ENCODE measurements at regions of chr14 and their contacts with region 1.

Region 1: DNA sequence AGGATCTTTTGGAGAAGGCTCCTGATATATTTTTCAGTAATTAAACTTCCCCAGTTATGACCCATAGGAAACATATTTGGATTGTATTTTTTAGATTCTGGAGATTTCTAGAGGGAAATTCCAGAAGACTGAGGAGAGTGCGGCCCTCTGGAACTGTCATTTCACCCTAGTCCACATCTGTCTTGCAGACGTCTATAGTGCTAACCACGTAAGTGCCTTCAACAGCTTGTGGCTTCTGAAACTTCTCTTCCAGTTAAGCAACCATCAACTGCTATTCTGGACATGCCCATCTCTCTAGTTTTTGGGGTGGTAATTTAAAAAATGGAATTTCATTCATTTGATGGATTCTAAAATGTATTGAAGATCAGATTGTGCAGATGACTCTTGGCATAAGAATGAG is 1098.8 kb downstream of the TMEM121 start:
- DNase-seq: no peak
- H3K4me3 Mint-ChIP-seq: no peak overlapping the region
- H3K27ac Mint-ChIP-seq: no peak overlapping the region
- H3K4me1 Mint-ChIP-seq: peaks cover 20% of the 10 kb centered on the region
- H3K27me3 Mint-ChIP-seq: peaks cover 47% of the 10 kb centered on the region

Region 2: DNA sequence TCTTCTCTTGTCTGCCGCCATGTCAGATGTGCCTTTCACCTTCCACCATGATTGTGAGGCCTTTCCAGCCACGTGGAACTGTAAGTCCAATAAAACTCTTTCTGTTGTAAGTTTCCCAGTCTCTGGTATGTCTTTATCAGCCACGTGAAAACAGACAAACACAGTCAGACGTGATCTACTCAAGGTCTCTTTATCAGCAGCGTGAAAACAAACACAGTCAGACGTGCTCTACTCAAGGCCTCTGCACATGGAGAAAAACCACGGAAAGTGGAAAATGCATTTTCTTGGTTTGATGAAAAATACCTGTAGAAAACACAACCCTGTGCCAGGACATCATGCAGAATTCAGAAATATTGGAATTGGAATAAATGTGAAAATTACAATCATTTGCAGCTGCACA is 16.9 kb after region 1 on chr14:
- intact Hi-C with region 1: loop called (anchors 1 kb)
- DNase-seq: no peak
- H3K4me3 Mint-ChIP-seq: no peak overlapping the region
- H3K27ac Mint-ChIP-seq: no peak overlapping the region
- H3K4me1 Mint-ChIP-seq: no peaks in the 10 kb centered on the region
- H3K27me3 Mint-ChIP-seq: peaks cover 14% of the 10 kb centered on the region

Region 3: DNA sequence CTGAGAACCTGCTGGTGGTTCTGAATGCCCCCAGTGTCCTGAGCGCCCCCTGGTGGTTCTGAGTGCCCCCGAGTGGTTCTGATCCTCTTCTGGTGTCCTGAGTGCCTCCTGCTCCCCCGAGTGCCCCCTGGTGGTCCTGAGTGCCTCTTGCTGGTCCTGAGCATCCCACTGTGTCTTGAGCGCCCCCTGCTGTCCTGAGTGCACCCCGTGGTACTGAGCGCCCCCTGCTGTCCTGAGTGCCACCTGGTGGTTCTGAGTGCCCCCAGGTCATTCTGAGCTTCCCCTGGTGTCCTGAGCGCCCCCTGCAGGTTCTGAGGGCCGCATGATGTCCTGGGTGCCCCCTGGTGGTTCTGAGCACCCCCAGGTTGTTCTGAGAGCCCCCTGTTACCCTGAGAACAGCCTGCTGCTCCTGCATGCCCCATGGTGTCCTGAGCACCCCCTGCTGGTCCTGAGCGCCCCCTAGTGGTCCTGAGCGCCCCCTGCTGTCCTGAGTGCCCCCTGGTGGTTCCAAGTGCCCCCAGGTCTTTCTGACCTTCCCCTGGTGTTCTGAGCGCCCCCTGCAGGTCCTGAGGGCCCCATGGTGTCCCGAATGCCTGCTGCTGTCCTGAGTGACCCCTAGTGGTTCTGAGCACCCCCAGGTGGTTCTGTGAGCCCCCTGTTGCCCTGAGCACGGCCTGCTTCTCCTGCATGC is 66.6 kb after region 1 on chr14:
- intact Hi-C with region 1: no loop called
- DNase-seq: peak; percentile 68
- H3K4me3 Mint-ChIP-seq: no peak overlapping the region
- H3K27ac Mint-ChIP-seq: no peak overlapping the region
- H3K4me1 Mint-ChIP-seq: peaks cover 6% of the 10 kb centered on the region
- H3K27me3 Mint-ChIP-seq: peaks cover 11% of the 10 kb centered on the region

Measured in activated T-helper 1 cell treated with anti-CD3 and anti-CD28 coated beads, Interleukin-12 subunit alpha, Interleukin-12 subunit beta, Interleukin-2, Interleukin-4 antibody, amounts not matched to agents 30 ng/mL and 10 ng/mL and 1 ng/mL, durations not matched to agents 14 hours and 24 hours and 36 hours (primary cell).